Common myeloid progenitor, CD34-positive (primary cell): ENCODE measurements at regions of chr17 and their contacts with region 1.

Region 1: GRCh38 chr17:64320613-64321553 is 57.8 kb upstream of the TEX2 start:
- DNase-seq: peak; percentile 68 to 74 (median 69)
- H3K4me3 ChIP-seq: peak overlapping the region in 2 of 7 experiments; percentile 11 to 50
- H3K27ac ChIP-seq: no peak overlapping the region
- H3K4me1 ChIP-seq: peaks cover 0 to 6% (median 4%) of the 10 kb centered on the region in 4 experiments
- H3K27me3 ChIP-seq: no peaks in the 10 kb centered on the region

Region 2: DNA sequence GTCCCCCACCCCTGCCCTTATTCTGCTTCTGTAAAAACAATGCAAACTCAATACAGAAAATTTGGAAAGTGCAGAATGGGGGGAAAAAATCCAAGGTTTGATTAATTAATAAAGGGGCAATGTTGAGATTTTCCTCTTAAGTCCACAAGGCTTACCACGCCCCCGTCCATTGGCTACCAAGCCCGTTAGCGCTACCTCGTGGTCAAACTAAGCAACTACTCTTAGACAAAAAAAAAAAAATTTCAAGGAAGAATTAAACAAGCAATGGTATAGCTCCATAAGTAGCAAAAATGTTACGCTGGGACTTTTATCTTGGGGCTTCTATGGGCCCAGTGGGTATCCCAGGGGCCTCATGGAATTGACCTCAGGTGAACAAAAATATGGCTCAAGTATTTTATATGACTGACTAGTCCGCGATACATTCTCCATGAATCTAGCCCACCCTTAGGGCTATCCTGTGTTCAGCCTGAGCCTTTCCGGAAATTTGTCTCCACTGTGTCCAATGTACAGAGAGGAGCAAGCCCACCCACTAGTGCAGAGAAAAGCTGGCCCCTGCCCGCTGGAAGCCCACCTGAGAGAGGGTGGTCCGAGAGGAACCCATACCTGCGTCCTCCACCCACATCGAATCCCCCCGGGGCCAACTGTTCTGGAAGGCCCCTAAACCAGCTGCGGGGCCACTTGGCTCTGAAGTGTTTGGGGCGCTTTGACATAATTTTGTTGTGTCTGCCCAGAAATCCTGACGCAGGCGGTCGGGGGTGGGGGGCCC is 38.7 kb before region 1 on chr17:
- CTCF ChIA-PET with region 1: no interaction called
- POLR2A ChIA-PET with region 1: no interaction called
- DNase-seq: peak; percentile 88 to 93 (median 92)
- H3K4me3 ChIP-seq: peak overlapping the region in 1 of 7 experiments; percentile 30
- H3K27ac ChIP-seq: no peak overlapping the region
- H3K4me1 ChIP-seq: peaks cover 0 to 13% (median 4%) of the 10 kb centered on the region in 4 experiments
- H3K27me3 ChIP-seq: no peaks in the 10 kb centered on the region

Region 3: GRCh38 chr17:64306850-64307463 is 13.9 kb before region 1 on chr17:
- CTCF ChIA-PET with region 1: interaction called, 16 read pairs
- POLR2A ChIA-PET with region 1: no interaction called
- DNase-seq: peak; percentile 76 to 90 (median 84)
- H3K4me3 ChIP-seq: no peak overlapping the region
- H3K27ac ChIP-seq: no peak overlapping the region
- H3K4me1 ChIP-seq: no peaks in the 10 kb centered on the region
- H3K27me3 ChIP-seq: no peaks in the 10 kb centered on the region

Region 4: GRCh38 chr17:64332502-64332901 is 11.6 kb after region 1 on chr17:
- CTCF ChIA-PET with region 1: interaction called, 12 read pairs
- POLR2A ChIA-PET with region 1: no interaction called
- DNase-seq: no peak
- H3K4me3 ChIP-seq: no peak overlapping the region
- H3K27ac ChIP-seq: no peak overlapping the region
- H3K4me1 ChIP-seq: peaks cover 0 to 20% (median 12%) of the 10 kb centered on the region in 4 experiments
- H3K27me3 ChIP-seq: no peaks in the 10 kb centered on the region

Region 5: GRCh38 chr17:64357191-64357981 is 36.5 kb after region 1 on chr17:
- CTCF ChIA-PET with region 1: interaction called, 12 read pairs
- POLR2A ChIA-PET with region 1: no interaction called
- DNase-seq: no peak
- H3K4me3 ChIP-seq: no peak overlapping the region
- H3K27ac ChIP-seq: no peak overlapping the region
- H3K4me1 ChIP-seq: peaks cover 0 to 13% (median 0%) of the 10 kb centered on the region in 4 experiments
- H3K27me3 ChIP-seq: no peaks in the 10 kb centered on the region

Region 6: DNA sequence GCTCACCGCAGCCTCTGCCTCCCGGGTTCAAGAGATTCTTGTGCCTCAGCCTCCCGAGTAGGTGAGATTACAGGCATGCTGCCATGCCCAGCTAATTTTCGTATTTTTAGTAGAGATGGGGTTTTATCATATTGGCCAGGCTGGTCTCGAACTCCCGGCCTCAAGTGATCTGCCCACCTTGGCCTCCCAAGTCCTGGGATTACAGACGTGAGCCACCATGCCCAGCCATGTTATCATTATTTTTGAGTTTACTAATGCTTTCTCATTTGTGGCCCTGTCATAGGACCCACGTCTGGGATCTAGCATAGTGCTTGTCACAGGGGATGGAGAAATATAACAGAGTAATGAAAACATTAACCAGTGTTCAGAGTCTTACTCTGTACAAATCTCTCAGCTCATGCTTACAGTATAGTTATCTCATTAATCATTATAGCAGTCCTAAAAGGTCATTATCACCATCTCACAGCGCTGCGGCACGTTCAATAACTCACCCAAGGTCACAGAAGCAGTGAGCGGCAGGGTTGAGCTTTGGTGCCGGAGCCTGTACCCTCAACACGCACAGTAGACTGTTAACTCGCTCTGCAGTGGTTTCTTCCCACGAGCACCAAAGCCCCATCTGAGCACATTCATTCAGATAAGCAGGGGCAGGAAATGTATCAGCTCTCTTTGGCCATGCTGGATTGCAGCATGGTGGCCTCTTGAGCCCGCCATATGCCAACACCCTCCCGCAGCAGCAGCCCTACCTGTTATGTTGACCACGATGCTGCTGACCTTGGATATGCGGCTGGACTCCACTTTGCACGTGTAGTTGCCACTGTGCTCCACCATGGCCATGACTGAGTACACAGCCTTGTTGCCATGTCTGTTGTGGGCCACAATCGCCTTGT is 48.4 kb after region 1 on chr17:
- CTCF ChIA-PET with region 1: no interaction called
- POLR2A ChIA-PET with region 1: no interaction called
- DNase-seq: peak in 1 of 3 donors; percentile 52
- H3K4me3 ChIP-seq: no peak overlapping the region
- H3K27ac ChIP-seq: peak overlapping the region in 1 of 2 experiments; percentile 14
- H3K4me1 ChIP-seq: no peaks in the 10 kb centered on the region
- H3K27me3 ChIP-seq: no peaks in the 10 kb centered on the region

Region 7: DNA sequence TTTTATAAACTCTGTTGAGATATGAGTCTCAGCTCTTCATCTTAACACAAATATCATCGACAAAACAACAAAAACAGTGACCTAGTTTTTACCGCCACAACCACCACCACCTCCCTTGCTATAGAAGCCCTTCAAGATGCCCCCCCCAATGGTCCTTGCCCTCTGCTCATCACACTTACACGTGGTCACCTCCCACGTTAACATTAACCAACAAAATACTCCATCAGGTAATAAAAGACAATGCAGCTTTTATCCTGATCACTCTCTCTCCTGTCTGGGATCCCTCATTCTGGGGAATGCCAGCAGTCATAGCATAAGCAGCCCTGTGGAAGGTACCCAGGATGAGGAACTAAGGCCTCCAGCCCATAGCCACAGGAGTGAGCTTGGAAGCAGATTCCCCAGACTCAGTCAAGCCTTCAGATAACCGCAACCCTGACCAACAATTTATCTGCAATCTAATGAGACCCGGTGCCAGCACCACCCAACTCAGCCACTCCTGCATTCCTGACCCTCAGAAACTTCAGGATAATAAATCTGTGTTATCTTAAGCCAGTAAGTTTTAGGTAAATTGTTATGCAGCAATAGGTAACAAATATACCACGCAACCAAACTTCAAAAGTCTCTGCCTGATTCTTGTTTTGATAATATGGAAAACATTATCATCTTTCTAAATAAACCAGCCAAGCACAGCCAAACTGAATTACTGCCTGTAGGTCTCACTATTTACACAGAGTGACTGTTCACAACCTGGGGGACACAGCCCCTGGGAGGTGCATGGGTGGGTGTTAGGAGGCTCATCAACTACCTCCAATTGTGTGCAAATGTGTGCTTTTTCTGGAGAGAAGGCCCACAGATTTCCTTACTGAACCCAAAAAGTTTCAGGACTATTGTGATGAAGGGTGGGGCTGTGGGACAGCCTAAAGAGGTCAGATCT is 63.6 kb after region 1 on chr17:
- CTCF ChIA-PET with region 1: interaction called, 16 read pairs
- POLR2A ChIA-PET with region 1: no interaction called
- DNase-seq: no peak
- H3K4me3 ChIP-seq: peak overlapping the region in 2 of 7 experiments; percentile 20 to 24
- H3K27ac ChIP-seq: peak overlapping the region; percentile 12 to 85
- H3K4me1 ChIP-seq: peaks cover 17 to 56% (median 50%) of the 10 kb centered on the region in 4 experiments
- H3K27me3 ChIP-seq: no peaks in the 10 kb centered on the region

Region 8: GRCh38 chr17:64411999-64412771 is 91.3 kb after region 1 on chr17:
- CTCF ChIA-PET with region 1: interaction called, 76 read pairs
- POLR2A ChIA-PET with region 1: no interaction called
- DNase-seq: peak; percentile 64 to 91 (median 86)
- H3K4me3 ChIP-seq: peak overlapping the region; percentile 2 to 73 (median 49)
- H3K27ac ChIP-seq: peak overlapping the region; percentile 4 to 77
- H3K4me1 ChIP-seq: peaks cover 13 to 46% (median 39%) of the 10 kb centered on the region in 4 experiments
- H3K27me3 ChIP-seq: no peaks in the 10 kb centered on the region